ENCODE measurements at regions of chr5 and their contacts with region 1.

Region 1: GRCh38 chr5:170338933-170339779 is 41.6 kb upstream of the LCP2 start:
- DNase-seq: peak; percentile 79
- ATAC-seq: peak; percentile 70
- H3K4me3 Mint-ChIP-seq: no peak overlapping the region
- H3K27ac Mint-ChIP-seq: peak overlapping the region; percentile 75
- H3K4me1 Mint-ChIP-seq: peaks cover 39% of the 10 kb centered on the region
- H3K27me3 Mint-ChIP-seq: no peaks in the 10 kb centered on the region
- CTCF ChIP-seq: peak; percentile 95

Region 2: DNA sequence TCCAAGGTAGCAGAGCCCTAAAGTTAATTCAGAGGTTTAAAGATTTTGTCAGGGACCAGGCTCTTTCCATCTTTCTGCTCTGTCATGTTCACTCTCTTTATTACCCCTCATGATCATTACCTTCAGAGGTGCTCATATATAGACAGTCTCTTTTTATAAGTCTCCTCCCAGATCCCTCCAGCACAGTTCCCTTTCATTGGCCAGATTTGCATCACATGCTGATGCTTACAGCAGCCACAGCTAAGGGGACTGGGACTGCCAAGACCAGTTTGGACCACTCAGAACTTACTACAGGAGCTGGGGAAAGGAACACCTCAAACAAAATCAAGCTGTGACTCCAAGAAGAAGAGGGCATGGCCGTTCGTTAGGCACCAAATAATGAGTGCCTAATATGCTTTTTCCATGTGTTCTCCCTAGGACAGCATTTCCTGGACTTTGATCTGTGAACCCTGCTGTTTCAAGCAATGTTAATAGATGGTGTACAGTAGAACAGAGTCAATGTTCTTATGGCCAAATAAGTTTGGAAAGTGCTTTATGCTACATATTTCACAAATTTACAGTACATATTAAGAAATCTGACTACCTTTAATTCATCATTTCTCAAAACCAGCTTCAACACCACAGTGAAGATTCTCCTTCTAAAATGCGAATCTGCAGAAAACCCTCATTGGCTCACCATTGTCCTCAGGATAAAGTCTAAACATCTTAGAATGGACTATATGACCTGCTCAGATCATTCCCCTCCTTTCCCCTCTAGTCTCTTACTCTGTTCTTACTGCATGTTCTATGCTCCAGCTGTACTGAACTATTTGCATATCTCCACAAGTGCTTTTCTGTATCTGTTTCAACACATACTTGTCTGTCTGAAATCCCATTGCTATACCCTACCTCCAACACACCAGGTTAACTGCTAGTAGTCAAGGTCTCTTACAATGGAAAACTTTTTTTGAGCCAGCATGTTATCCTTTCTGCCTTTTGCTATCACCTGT is 103.0 kb before region 1 on chr5:
- CTCF ChIA-PET with region 1: interaction called, 43 read pairs
- POLR2A ChIA-PET with region 1: interaction called, 3 read pairs
- intact Hi-C with region 1: no loop called
- DNase-seq: no peak
- ATAC-seq: no peak
- H3K4me3 Mint-ChIP-seq: no peak overlapping the region
- H3K27ac Mint-ChIP-seq: no peak overlapping the region
- H3K4me1 Mint-ChIP-seq: peaks cover 9% of the 10 kb centered on the region
- H3K27me3 Mint-ChIP-seq: no peaks in the 10 kb centered on the region
- CTCF ChIP-seq: no peak

Region 3: DNA sequence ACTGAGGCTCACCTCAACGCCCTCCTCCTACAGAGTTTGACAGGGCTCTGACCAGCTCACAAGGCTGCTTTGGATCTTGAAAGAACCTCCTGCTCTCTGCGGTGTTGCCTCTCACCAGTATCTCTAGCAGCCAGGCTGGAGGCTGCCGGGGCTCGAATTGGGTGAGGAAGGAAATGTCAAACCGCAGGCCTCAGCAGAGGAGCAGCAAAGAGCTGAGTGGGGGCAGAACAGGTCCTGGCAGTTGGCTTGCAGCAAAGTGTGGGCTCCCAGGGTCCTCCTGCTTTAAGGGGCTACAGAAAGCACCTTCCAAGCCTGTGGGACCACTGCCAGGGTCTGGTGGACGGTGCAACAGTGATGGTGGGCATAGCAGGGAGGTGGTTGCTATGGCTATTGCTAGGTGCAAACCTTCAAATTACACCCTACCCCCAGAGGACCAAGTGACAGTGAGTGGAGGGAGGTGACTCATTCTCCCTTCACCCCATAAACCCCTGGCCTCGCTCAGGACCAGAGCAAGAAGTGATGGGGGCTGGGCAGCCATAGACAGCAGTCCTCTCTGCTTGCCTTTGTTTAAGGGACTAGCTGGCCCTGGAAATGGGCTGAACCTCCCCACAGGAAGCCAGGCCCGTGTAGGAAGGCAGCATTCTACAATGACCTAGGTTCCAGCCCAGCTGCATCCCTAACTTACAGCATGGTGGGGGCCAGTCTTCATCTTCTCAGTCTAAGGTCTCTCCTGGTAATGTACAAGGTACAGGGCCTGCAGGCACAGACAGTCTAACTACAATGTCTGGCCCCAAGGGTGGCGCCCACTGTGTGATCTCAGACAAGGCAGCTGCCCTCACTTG is 60.3 kb before region 1 on chr5:
- CTCF ChIA-PET with region 1: interaction called, 101 read pairs
- POLR2A ChIA-PET with region 1: interaction called, 24 read pairs
- intact Hi-C with region 1: no loop called
- DNase-seq: peak; percentile 97
- ATAC-seq: peak; percentile 76
- H3K4me3 Mint-ChIP-seq: peak overlapping the region; percentile 43
- H3K27ac Mint-ChIP-seq: peak overlapping the region; percentile 96
- H3K4me1 Mint-ChIP-seq: peaks cover 93% of the 10 kb centered on the region
- H3K27me3 Mint-ChIP-seq: no peaks in the 10 kb centered on the region
- CTCF ChIP-seq: no peak

Region 4: GRCh38 chr5:170293273-170293672 is 45.9 kb before region 1 on chr5:
- CTCF ChIA-PET with region 1: interaction called, 204 read pairs
- POLR2A ChIA-PET with region 1: interaction called, 186 read pairs
- intact Hi-C with region 1: no loop called
- DNase-seq: peak; percentile 89
- ATAC-seq: peak; percentile 43
- H3K4me3 Mint-ChIP-seq: peak overlapping the region; percentile 97
- H3K27ac Mint-ChIP-seq: peak overlapping the region; percentile 96
- H3K4me1 Mint-ChIP-seq: peaks cover 61% of the 10 kb centered on the region
- H3K27me3 Mint-ChIP-seq: no peaks in the 10 kb centered on the region
- CTCF ChIP-seq: no peak

Region 5: GRCh38 chr5:170312666-170313065 is 26.5 kb before region 1 on chr5:
- CTCF ChIA-PET with region 1: interaction called, 204 read pairs
- POLR2A ChIA-PET with region 1: interaction called, 86 read pairs
- intact Hi-C with region 1: no loop called
- DNase-seq: peak; percentile 82
- ATAC-seq: peak; percentile 91
- H3K4me3 Mint-ChIP-seq: peak overlapping the region; percentile 75
- H3K27ac Mint-ChIP-seq: peak overlapping the region; percentile 87
- H3K4me1 Mint-ChIP-seq: peaks cover 66% of the 10 kb centered on the region
- H3K27me3 Mint-ChIP-seq: no peaks in the 10 kb centered on the region
- CTCF ChIP-seq: no peak

Region 6: DNA sequence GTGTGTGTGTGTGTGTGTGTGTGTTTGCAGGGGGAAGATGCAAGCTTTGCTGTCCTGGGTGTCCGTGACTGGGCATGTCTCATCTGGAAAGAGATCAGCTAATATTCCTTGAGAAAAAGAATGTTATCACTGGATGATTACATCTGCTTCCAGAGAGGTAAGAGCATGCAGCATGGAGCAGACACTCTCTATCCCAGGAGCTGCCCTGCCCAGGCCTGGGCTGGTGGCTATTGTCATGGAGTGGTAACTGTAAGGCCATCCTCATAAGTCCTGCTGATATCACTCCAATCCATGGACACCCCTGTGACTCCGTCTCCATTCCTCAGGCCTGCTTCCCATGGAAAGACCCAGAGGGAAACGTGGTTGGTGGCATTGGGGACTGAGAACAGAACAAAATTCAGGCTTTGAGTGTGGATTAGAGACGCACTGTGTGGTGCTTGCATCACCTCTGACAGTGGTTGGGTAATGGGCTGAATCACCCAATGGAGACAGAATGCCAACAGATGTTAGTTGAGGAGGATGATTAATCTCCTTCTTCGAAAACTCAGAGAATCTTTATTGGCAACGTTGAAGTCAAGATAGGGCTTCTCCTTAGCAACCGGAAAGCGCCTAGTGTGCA is 112.7 kb after region 1 on chr5:
- CTCF ChIA-PET with region 1: no interaction called
- POLR2A ChIA-PET with region 1: no interaction called
- intact Hi-C with region 1: no loop called
- DNase-seq: no peak
- ATAC-seq: no peak
- H3K4me3 Mint-ChIP-seq: no peak overlapping the region
- H3K27ac Mint-ChIP-seq: no peak overlapping the region
- H3K4me1 Mint-ChIP-seq: no peaks in the 10 kb centered on the region
- H3K27me3 Mint-ChIP-seq: no peaks in the 10 kb centered on the region
- CTCF ChIP-seq: no peak